Activated CD4-positive, alpha-beta memory T cell treated with anti-CD3 and anti-CD28 coated beads, Interleukin-2, amount 10 ng/mL, durations not matched to agents 7 days and 5 days (primary cell): ENCODE measurements at regions of chr19 and their contacts with region 1.

Region 1: GRCh38 chr19:6125571-6125989 is 9.9 kb upstream of the ACSBG2 start:
- DNase-seq: peak; percentile 67
- H3K4me3 Mint-ChIP-seq: no peak overlapping the region
- H3K27ac Mint-ChIP-seq: no peak overlapping the region
- H3K4me1 Mint-ChIP-seq: no peaks in the 10 kb centered on the region
- H3K27me3 Mint-ChIP-seq: peaks cover 1% of the 10 kb centered on the region

Region 2: GRCh38 chr19:6048808-6049405 is 76.7 kb before region 1 on chr19:
- CTCF ChIA-PET with region 1: interaction called, 89 read pairs
- POLR2A ChIA-PET with region 1: interaction called, 5 read pairs
- DNase-seq: peak; percentile 80
- H3K4me3 Mint-ChIP-seq: no peak overlapping the region
- H3K27ac Mint-ChIP-seq: no peak overlapping the region
- H3K4me1 Mint-ChIP-seq: peaks cover 4% of the 10 kb centered on the region
- H3K27me3 Mint-ChIP-seq: peaks cover 6% of the 10 kb centered on the region

Region 3: DNA sequence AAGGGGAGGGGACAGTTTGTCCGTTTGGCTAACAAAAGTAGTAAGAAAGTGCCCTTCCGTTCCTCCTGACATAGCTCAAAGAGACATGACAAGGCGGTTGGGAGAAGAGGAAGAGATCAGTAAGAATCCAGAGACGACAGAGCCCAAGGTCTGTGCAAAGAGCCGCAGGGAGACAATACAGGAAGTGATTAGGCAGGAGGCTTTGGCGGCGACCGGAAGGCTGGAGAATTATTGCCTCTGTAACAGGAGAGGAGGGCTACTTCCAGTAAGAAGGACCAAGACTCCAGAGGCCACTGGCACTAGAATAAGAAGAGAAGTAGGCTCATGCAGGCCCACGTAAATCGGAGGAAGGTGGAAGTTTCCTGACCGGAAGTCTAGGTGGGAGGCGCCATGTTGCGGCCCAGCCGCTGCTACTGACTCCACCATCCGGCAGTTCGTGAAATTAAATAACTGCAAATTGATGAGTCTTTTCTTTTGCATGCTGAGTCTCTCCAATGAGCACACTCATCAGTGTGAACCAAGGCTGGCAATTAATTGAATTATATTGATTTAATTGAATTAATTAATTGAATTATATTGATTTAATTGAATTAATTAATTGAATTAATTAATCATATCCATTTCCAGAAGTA is 25.2 kb before region 1 on chr19:
- CTCF ChIA-PET with region 1: interaction called, 10 read pairs
- POLR2A ChIA-PET with region 1: no interaction called
- DNase-seq: peak; percentile 54
- H3K4me3 Mint-ChIP-seq: peak overlapping the region; percentile 44
- H3K27ac Mint-ChIP-seq: peak overlapping the region; percentile 60
- H3K4me1 Mint-ChIP-seq: peaks cover 13% of the 10 kb centered on the region
- H3K27me3 Mint-ChIP-seq: no peaks in the 10 kb centered on the region